ENCODE measurements at regions of chr14 and their contacts with region 1.

Region 1: DNA sequence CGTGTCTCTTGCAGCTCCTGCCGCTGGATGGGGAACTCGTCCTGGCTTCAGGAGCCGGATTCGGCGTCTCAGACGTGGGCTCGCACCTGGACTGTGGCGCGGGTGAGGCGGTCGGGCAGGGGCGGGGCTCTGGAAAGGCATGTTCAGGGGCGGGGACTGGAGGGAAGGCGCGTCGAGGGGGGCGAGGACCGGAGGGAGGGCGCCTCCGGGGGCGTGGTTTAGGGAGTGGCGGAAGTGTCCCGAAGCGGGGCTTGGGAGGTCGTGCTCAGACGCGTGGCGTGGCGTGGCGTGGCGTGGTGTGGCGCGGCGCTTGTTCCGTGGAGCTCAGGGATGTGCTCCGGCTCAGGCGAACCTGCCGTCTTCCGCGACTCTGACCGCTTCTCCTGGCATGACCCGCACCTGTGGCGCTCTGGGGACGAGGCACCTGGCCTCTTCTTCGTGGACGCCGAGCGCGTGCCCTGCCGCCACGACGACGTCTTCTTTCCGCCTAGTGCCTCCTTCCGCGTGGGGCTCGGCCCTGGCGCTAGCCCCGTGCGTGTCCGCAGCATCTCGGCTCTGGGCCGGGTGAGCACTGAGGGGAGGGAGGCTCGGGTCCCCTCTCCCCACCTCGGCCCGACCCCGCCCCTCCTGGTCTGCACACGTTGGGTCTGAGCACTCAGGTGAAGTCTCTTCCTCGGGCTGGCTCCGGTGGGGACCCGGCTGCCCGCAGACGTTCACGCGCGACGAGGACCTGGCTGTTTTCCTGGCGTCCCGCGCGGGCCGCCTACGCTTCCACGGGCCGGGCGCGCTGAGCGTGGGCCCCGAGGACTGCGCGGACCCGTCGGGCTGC is 6.2 kb downstream of the AMN start:
- DNase-seq: peak; percentile 68 to 84 (median 81)
- ATAC-seq: peak; percentile 55 to 70
- H3K4me3 ChIP-seq: peak overlapping the region; percentile 41
- H3K27ac ChIP-seq: no peak overlapping the region
- H3K4me1 ChIP-seq: peaks cover 6% of the 10 kb centered on the region
- H3K27me3 ChIP-seq: no peaks in the 10 kb centered on the region

Region 2: GRCh38 chr14:102774391-102775153 is 154.1 kb before region 1 on chr14:
- intact Hi-C with region 1: loop called in 1 of 4 experiments (anchors 10 kb)
- DNase-seq: peak in 2 of 3 donors; percentile 32 to 57
- ATAC-seq: peak; percentile 62 to 63
- H3K4me3 ChIP-seq: no peak overlapping the region
- H3K27ac ChIP-seq: no peak overlapping the region
- H3K4me1 ChIP-seq: no peaks in the 10 kb centered on the region
- H3K27me3 ChIP-seq: no peaks in the 10 kb centered on the region